Activated CD4-positive, alpha-beta T cell treated with anti-CD3 and anti-CD28 coated beads for 36 hours (primary cell): ENCODE measurements at regions of chr1 and their contacts with region 1.

Region 1: GRCh38 chr1:41783189-41783639 is 135.5 kb downstream of the HIVEP3 start:
- DNase-seq: peak; percentile 78
- ATAC-seq: peak; percentile 98
- H3K4me3 Mint-ChIP-seq: peak overlapping the region; percentile 64
- H3K27ac Mint-ChIP-seq: peak overlapping the region; percentile 86
- H3K4me1 Mint-ChIP-seq: peaks cover 35% of the 10 kb centered on the region
- H3K27me3 Mint-ChIP-seq: no peaks in the 10 kb centered on the region

Region 2: GRCh38 chr1:40808909-40809308 is 974.3 kb before region 1 on chr1:
- CTCF ChIA-PET with region 1: no interaction called
- POLR2A ChIA-PET with region 1: no interaction called
- intact Hi-C with region 1: no loop called
- DNase-seq: no peak
- ATAC-seq: no peak
- H3K4me3 Mint-ChIP-seq: no peak overlapping the region
- H3K27ac Mint-ChIP-seq: peak overlapping the region; percentile 80
- H3K4me1 Mint-ChIP-seq: peaks cover 19% of the 10 kb centered on the region
- H3K27me3 Mint-ChIP-seq: no peaks in the 10 kb centered on the region

Region 3: DNA sequence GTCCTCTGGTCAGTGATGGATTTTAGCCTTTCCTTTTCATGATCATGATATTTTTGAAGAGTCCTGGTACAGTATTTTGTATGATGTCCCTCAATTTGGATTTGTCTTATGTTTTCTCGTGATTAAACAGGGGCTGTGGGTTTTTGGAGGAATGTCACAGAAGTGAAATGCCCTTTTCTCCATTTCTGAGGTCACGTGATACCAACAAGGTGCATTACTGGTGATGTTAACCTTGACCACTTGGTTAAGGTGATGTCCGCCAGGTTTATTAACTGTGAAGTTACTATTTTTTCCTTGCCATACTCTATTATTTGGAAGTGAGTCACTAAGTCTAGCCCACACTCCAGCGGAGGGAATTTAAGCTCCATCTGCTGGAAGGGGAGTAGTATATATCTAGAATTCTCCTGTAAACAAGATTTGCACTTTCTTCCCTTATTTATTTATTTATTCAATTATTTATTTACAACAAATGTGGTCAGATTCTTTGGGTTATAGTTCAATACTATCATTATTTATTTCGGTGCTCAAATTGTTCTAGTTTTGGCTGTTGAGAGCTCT is 12.1 kb after region 1 on chr1:
- CTCF ChIA-PET with region 1: no interaction called
- POLR2A ChIA-PET with region 1: no interaction called
- intact Hi-C with region 1: loop called (anchors 1 kb)
- DNase-seq: no peak
- ATAC-seq: no peak
- H3K4me3 Mint-ChIP-seq: no peak overlapping the region
- H3K27ac Mint-ChIP-seq: no peak overlapping the region
- H3K4me1 Mint-ChIP-seq: peaks cover 62% of the 10 kb centered on the region
- H3K27me3 Mint-ChIP-seq: no peaks in the 10 kb centered on the region

Region 4: DNA sequence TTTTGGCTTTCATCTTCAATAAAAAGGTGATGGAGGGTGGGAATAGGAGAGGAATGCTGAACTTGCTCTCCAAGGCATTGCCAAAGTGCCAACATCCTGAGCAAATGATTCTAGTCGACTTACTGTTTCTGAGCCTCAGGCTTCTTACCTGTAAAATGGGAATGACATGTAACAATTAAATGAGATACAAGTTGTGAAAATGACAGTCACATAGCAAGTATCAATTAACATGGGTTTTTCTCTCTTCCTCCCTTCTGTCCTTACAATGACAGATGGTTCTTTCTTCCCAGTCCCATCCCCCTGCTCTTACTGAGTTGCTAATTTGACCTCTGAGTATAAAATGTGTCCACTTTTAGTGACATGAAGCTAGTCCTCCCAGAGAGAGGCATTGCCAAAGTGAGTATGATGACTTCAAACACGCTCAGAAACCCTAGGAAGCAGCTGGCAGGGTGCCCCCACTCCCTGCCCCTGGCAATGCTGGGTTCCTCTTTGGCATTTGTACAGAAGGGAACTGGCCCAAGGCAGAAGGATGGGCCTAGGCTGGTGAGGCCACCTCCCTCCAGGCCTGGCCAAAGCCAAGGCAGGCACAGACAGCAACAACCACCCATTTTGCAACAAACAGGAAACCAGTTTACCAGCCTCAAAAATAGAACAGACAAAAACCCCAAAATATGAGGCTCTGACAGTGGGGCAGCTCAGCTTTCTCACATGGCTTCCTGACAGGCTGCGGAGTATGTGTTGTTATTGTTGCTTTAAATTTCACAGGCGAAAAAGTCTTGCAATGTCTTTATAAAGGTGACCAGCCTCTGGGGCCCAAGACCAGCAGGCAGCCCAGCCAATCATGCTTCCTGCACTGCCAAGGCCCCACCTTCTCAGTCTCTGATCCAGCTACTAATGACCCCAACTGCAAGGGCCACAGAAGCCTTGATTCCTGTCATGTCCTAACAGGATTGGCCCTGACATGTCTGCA is 19.6 kb after region 1 on chr1:
- CTCF ChIA-PET with region 1: no interaction called
- POLR2A ChIA-PET with region 1: interaction called, 6 read pairs
- intact Hi-C with region 1: loop called (anchors 2 kb)
- DNase-seq: no peak
- ATAC-seq: no peak
- H3K4me3 Mint-ChIP-seq: no peak overlapping the region
- H3K27ac Mint-ChIP-seq: peak overlapping the region; percentile 47
- H3K4me1 Mint-ChIP-seq: peaks cover 81% of the 10 kb centered on the region
- H3K27me3 Mint-ChIP-seq: no peaks in the 10 kb centered on the region

Region 5: DNA sequence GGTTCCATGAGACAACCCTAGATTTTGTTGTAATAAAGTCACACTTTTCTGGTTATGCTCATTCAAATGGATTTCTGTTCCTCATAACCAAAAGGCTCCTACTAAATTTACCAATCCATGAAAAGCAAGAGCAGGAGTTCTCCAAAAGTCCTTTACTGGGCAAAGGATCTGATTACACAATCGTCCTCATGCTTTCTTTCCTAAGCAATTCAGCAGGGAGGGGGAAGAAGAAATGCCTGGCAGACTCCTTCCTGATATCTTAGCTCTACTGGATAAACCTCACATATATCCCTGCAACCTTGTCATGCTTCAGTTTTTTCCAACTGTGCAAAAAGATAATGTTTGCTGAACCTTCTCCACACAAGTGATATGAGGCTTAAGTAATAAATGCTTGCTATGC is 302.4 kb after region 1 on chr1:
- CTCF ChIA-PET with region 1: no interaction called
- POLR2A ChIA-PET with region 1: no interaction called
- intact Hi-C with region 1: no loop called
- DNase-seq: no peak
- ATAC-seq: no peak
- H3K4me3 Mint-ChIP-seq: no peak overlapping the region
- H3K27ac Mint-ChIP-seq: no peak overlapping the region
- H3K4me1 Mint-ChIP-seq: peaks cover 2% of the 10 kb centered on the region
- H3K27me3 Mint-ChIP-seq: peaks cover 11% of the 10 kb centered on the region